Sciatic nerve (tissue), 2 donors: ENCODE measurements at regions of chr20 and their contacts with region 1.

Region 1: GRCh38 chr20:33097001-33097400 is 17.6 kb downstream of the BPIFB4 start:
- DNase-seq: no peak
- ATAC-seq: peak; percentile 41

Region 2: DNA sequence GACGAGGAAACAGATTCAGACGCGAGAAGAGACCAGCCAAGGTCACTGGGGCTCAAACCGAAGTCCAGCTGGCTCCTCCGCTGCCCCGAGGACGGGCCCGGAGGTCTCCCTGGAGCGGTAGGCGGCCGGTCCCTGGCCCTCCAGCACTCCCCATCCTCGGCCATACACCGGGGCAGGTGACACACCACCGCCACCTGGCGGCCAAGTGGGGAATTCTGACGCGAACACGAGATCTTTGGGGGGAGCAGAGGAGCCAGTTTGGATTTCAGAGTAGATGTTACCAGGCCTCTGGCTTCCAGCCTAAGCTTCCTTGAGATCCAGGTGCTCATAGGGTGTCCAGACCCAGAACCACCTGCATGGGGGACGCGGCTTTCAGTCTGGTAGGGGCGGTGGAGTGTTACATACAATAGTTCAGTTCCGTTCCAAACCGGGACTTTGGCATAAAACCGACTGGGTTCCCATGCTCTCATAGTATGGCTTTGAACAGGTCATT is 202.2 kb after region 1 on chr20:
- intact Hi-C with region 1: loop called (anchors 5 kb)
- DNase-seq: peak; percentile 78
- ATAC-seq: peak; percentile 80